ENCODE measurements at regions of chr5 and their contacts with region 1.

Region 1: GRCh38 chr5:180648641-180649296 is 631 bp downstream of the FLT4 start:
- H3K4me3 ChIP-seq: peak overlapping the region; percentile 49
- H3K27ac ChIP-seq: no peak overlapping the region
- H3K4me1 ChIP-seq: peaks cover 2% of the 10 kb centered on the region; the same call in 1 of the 2 replicates
- CTCF ChIP-seq: peak; percentile 27; the same call in 1 of the 2 replicates

Region 2: GRCh38 chr5:180519098-180519497 is 129.7 kb before region 1 on chr5:
- CTCF ChIA-PET with region 1: no interaction called
- POLR2A ChIA-PET with region 1: no interaction called
- H3K4me3 ChIP-seq: no peak overlapping the region
- H3K27ac ChIP-seq: no peak overlapping the region
- H3K4me1 ChIP-seq: peaks cover 43% of the 10 kb centered on the region
- CTCF ChIP-seq: no peak

Region 3: GRCh38 chr5:180618819-180619562 is 29.8 kb before region 1 on chr5:
- CTCF ChIA-PET with region 1: interaction called, 16 read pairs
- POLR2A ChIA-PET with region 1: no interaction called
- H3K4me3 ChIP-seq: peak overlapping the region; percentile 46
- H3K27ac ChIP-seq: peak overlapping the region; percentile 78; the same call in 1 of the 2 replicates
- H3K4me1 ChIP-seq: no peaks in the 10 kb centered on the region; the same call in 1 of the 2 replicates
- CTCF ChIP-seq: peak; percentile 74

Region 4: GRCh38 chr5:180658774-180659564 is 10.2 kb after region 1 on chr5:
- CTCF ChIA-PET with region 1: interaction called, 10 read pairs
- POLR2A ChIA-PET with region 1: no interaction called
- H3K4me3 ChIP-seq: no peak overlapping the region
- H3K27ac ChIP-seq: no peak overlapping the region
- H3K4me1 ChIP-seq: no peaks in the 10 kb centered on the region
- CTCF ChIP-seq: no peak